MCF 10A (cell line): ENCODE measurements at regions of chr1 and their contacts with region 1.

Region 1: GRCh38 chr1:22416555-22417454 is 34.8 kb upstream of the ZBTB40 start:
- DNase-seq: peak; percentile 77
- H3K4me3 Mint-ChIP-seq: no peak overlapping the region
- H3K27ac Mint-ChIP-seq: no peak overlapping the region
- H3K4me1 Mint-ChIP-seq: no peaks in the 10 kb centered on the region
- H3K27me3 Mint-ChIP-seq: peaks cover 29% of the 10 kb centered on the region
- CTCF ChIP-seq: peak; percentile 97

Region 2: GRCh38 chr1:21659099-21659923 is 757.5 kb before region 1 on chr1:
- CTCF ChIA-PET with region 1: no interaction called
- POLR2A ChIA-PET with region 1: interaction called, 3 read pairs
- intact Hi-C with region 1: loop called (anchors 5 kb)
- DNase-seq: peak; percentile 62
- H3K4me3 Mint-ChIP-seq: peak overlapping the region; percentile 35
- H3K27ac Mint-ChIP-seq: no peak overlapping the region
- H3K4me1 Mint-ChIP-seq: no peaks in the 10 kb centered on the region
- H3K27me3 Mint-ChIP-seq: peaks cover 29% of the 10 kb centered on the region
- CTCF ChIP-seq: peak; percentile 99

Region 3: GRCh38 chr1:22105611-22106207 is 311.1 kb before region 1 on chr1:
- CTCF ChIA-PET with region 1: interaction called, 10 read pairs
- POLR2A ChIA-PET with region 1: interaction called, 4 read pairs
- intact Hi-C with region 1: loop called (anchors 1 kb)
- DNase-seq: peak; percentile 49
- H3K4me3 Mint-ChIP-seq: no peak overlapping the region
- H3K27ac Mint-ChIP-seq: no peak overlapping the region
- H3K4me1 Mint-ChIP-seq: no peaks in the 10 kb centered on the region
- H3K27me3 Mint-ChIP-seq: no peaks in the 10 kb centered on the region
- CTCF ChIP-seq: peak; percentile 63

Region 4: DNA sequence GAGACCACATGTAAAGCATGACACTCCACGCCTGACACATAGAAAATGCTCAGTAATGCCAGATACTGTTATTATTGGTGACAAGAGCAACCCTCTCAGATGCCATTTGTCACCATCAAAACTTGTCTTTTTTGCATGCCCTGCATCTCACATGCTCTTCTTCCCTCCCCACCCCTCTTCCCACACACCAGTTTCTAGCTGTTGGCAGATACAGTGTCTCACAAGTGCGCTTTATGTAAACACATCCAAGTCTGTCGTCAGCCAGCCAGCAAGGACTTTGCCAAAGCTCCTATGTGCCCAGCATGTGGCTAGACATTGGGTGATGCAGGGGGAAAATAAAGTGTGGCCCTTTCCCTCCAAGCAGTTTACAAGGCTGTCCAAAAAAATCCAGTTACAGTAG is 101.6 kb after region 1 on chr1:
- CTCF ChIA-PET with region 1: no interaction called
- POLR2A ChIA-PET with region 1: no interaction called
- intact Hi-C with region 1: no loop called
- DNase-seq: no peak
- H3K4me3 Mint-ChIP-seq: no peak overlapping the region
- H3K27ac Mint-ChIP-seq: no peak overlapping the region
- H3K4me1 Mint-ChIP-seq: no peaks in the 10 kb centered on the region
- H3K27me3 Mint-ChIP-seq: no peaks in the 10 kb centered on the region
- CTCF ChIP-seq: no peak

Region 5: DNA sequence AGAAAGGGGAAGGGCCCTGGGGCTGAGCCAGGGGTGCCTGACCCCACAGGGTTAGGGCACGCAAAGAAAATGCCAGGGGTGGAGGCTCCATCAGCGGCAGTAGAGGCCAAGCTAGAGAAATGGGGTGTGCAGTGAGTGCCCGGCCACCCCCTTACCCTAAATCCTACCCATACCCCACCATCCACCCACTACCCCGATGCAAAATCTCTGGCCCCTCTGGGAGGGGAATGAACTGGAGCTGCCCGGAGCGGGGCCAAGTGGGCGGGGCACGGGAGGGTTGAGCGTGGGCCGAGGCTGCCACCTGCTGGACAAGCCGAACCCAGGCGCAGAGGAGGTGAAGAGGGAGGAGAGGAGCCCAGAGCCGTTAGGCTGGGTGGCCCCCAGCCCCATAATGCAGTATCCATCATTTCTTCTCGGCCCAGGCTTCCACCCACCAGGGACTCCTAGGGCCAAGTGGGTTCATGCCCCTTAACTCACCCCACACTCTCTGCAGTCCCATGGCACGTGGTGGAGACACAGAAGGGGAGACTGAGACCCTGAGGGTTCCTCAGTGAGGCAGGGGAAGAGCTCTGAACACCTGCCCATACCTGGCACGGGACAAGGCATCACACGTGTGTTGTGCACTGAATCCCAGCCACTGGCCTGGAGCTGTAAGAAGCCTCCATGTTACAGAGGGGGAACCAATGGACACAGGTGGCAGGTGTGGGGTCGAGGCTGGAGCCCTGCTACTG is 225.3 kb after region 1 on chr1:
- CTCF ChIA-PET with region 1: interaction called, 106 read pairs
- POLR2A ChIA-PET with region 1: interaction called, 5 read pairs
- intact Hi-C with region 1: loop called (anchors 1 kb)
- DNase-seq: peak; percentile 61
- H3K4me3 Mint-ChIP-seq: no peak overlapping the region
- H3K27ac Mint-ChIP-seq: no peak overlapping the region
- H3K4me1 Mint-ChIP-seq: no peaks in the 10 kb centered on the region
- H3K27me3 Mint-ChIP-seq: peaks cover 7% of the 10 kb centered on the region
- CTCF ChIP-seq: peak; percentile 84